Psoas muscle (tissue), 8 donors: ENCODE measurements at regions of chr1 and their contacts with region 1.

Region 1: GRCh38 chr1:16187748-16188401 is 24.6 kb downstream of the ARHGEF19 start:
- DNase-seq: peak; percentile 80 to 81
- ATAC-seq: peak; percentile 74 to 86 (median 77)
- H3K4me3 ChIP-seq: no peak overlapping the region
- H3K27ac ChIP-seq: no peak overlapping the region
- H3K4me1 ChIP-seq: no peaks in the 10 kb centered on the region
- H3K27me3 ChIP-seq: peaks cover 0 to 10% (median 9%) of the 10 kb centered on the region in 3 donors
- CTCF ChIP-seq: peak; percentile 93

Region 2: GRCh38 chr1:16078925-16079656 is 108.8 kb before region 1 on chr1:
- intact Hi-C with region 1: loop called (anchors 1 to 2 kb)
- DNase-seq: peak; percentile 78 to 84
- ATAC-seq: peak; percentile 64 to 76 (median 71)
- H3K4me3 ChIP-seq: no peak overlapping the region
- H3K27ac ChIP-seq: no peak overlapping the region
- H3K4me1 ChIP-seq: no peaks in the 10 kb centered on the region
- H3K27me3 ChIP-seq: peaks cover 0 to under 1% (median 0%) of the 10 kb centered on the region in 3 donors
- CTCF ChIP-seq: peak; percentile 86

Region 3: DNA sequence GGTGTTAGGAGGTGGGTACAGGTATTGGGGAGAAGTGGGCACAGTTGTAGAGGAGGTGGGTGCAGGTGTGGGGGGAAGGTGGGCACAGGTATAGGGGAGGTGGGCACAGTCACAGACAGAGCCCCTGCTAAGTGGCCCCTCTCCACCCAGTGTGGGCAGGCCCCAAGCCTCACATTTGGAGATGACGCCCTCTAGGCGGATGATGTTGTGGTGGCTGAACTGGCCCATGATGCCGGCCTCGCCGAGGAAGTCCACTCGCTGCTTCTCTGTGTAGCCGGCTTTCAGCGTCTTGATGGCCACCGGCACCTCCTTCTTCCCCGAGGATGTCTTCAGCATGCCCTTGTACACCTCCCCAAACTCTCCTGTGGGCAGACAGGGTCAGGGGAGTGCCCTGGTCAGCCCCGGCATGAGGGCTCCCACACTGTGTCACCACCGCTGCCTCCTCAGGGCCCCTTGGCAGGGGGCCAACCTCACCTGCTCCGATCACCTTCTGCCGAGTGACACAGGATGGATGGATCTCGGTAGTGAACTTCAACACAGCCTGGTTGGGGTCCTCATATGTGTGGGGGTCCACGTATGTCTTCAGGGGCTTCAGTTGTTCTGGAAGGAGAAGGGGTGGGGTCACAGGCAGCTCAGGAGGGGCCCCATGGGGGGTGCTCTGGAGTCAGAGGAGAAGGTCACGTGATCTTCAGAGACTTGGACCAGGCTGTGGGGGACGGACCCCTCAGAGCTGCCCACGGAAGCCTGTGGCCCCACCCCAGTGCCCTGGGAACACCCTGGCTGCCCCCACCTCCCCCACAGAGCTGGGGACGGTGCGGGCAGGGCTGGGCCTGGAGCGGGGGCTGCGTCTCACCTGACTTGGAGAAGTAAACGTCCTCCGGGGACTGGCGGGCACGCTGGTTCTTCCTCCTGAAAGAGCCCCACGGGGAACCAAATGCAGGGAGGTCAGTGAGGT is 54.6 kb before region 1 on chr1:
- intact Hi-C with region 1: no loop called
- DNase-seq: no peak
- ATAC-seq: peak in 1 of 4 donors; percentile 14
- H3K4me3 ChIP-seq: no peak overlapping the region
- H3K27ac ChIP-seq: no peak overlapping the region
- H3K4me1 ChIP-seq: no peaks in the 10 kb centered on the region
- H3K27me3 ChIP-seq: no peaks in the 10 kb centered on the region
- CTCF ChIP-seq: no peak